HEK293 (cell line): ENCODE measurements at regions of chr20 and their contacts with region 1.

Region 1: DNA sequence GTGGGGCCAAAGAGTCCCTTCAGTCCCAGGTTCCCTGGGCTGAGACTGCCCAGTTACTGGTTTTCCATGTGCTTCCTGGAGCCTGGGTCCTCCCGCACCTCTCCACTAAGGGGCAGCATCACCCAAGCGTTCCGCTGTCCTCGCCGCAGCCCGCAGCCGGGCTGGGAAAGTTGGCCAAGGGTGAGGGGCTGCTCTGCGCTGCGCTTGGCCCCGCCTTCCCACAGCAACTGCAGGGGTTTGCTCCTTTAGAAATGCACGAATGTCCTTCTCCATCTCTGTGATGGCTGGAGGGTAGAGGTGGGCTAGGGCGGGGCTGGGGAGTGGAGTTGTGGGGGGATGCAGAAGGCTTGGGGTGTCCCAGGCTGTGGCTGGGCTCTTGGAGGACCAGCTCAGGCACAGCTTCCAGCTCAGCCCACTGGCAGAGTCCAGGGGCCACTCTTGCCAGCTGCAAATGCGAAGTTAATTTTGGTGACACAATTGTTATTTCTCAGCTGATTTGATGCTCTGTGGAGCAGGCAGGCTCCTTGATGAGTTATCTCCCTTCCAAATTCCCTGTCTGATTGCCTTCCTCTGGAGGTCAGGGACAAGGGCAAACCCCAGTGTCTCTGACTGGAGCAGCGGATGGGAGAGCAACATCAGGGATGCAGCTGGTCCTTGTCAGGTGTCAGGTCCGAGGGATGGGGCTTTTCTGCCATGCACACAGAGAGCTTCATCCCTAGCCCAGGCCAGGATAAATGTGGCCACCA is 63.2 kb downstream of the NOL4L start:
- H3K4me3 ChIP-seq: no peak overlapping the region
- H3K27ac ChIP-seq: no peak overlapping the region
- H3K4me1 ChIP-seq: no peaks in the 10 kb centered on the region; the same call in 1 of the 2 replicates
- CTCF ChIP-seq: peak; percentile 90

Region 2: GRCh38 chr20:32474967-32475811 is 46.8 kb before region 1 on chr20:
- CTCF ChIA-PET with region 1: no interaction called
- POLR2A ChIA-PET with region 1: no interaction called
- H3K4me3 ChIP-seq: peak overlapping the region; percentile 11
- H3K27ac ChIP-seq: peak overlapping the region; percentile 40; the same call in 1 of the 2 replicates
- H3K4me1 ChIP-seq: peaks cover 12% of the 10 kb centered on the region
- CTCF ChIP-seq: no peak

Region 3: GRCh38 chr20:32509639-32510066 is 12.3 kb before region 1 on chr20:
- CTCF ChIA-PET with region 1: interaction called, 11 read pairs
- POLR2A ChIA-PET with region 1: no interaction called
- H3K4me3 ChIP-seq: no peak overlapping the region
- H3K27ac ChIP-seq: no peak overlapping the region
- H3K4me1 ChIP-seq: no peaks in the 10 kb centered on the region; the same call in none of the 2 replicates
- CTCF ChIP-seq: no peak

Region 4: DNA sequence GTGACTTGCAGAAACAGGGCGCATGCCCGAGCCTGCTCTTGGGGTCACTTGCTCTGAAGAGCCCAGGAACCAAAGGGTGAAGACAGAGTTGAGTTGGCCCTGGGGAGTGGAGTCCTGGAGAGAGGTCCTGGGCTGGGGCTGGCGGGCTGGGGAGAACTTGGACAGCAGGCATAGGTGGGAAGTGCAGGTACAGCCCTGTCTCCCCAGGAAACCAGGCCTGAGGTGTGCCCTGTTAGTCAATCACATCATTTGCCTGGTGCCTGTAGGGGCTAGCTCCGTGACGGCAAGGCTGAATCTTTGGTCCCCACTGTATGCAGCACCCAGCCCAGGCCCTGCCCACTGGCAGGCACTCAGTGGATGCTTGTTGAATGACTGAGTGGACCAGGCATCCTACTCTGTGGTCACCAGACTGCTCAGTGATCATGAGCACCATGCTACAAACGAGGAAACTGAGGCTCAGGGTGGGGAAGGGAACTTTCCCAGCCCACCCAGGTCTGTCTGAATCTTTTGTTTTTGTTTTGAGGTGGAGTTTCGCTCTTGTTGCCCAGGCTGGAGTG is 78.8 kb after region 1 on chr20:
- CTCF ChIA-PET with region 1: no interaction called
- POLR2A ChIA-PET with region 1: no interaction called
- H3K4me3 ChIP-seq: no peak overlapping the region
- H3K27ac ChIP-seq: no peak overlapping the region
- H3K4me1 ChIP-seq: no peaks in the 10 kb centered on the region
- CTCF ChIP-seq: no peak

Region 5: DNA sequence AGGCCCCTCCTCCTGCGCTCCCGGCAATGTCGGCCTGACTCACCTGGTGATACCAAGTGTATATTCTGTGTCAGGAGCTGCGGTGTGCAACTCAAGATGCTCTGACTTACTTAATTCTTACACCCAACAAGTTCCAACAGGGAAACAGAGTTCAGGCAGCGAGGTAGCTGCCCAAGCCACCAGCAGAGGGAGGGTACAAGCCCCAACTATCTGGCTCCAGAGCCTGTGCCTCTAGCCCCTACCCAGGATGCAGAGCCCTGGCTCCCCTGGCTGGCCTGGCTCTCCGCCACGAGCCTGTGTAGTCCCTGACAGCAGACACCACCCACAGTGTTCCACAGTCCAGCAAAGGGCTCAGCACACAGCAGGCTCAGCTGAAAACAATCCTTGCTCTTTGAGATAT is 116.9 kb after region 1 on chr20:
- CTCF ChIA-PET with region 1: interaction called, 23 read pairs
- POLR2A ChIA-PET with region 1: no interaction called
- H3K4me3 ChIP-seq: no peak overlapping the region
- H3K27ac ChIP-seq: no peak overlapping the region
- H3K4me1 ChIP-seq: no peaks in the 10 kb centered on the region
- CTCF ChIP-seq: no peak